GM12878 (cell line): ENCODE measurements at regions of chr22 and their contacts with region 1.

Region 1: DNA sequence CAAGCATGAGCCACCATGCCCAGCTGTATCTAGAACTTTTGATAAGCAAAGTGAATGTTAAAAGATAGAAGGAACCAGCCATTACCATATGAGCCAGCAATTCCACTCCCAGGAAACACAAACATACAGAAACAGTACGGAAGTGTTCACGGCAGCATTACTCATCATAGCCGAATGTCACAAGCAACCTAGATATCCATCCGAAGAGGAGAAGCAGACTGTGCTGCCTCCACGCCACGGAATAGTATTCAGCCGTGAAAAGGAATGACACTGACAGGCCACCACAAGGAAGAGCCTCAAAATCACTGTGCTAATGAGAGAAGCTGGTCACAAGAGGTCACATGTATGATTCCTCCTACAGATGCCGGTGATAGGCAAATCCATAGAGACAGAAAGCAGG is 17.6 kb upstream of the MGAT3 start:
- DNase-seq: no peak
- ATAC-seq: no peak
- H3K4me3 ChIP-seq: no peak overlapping the region
- H3K27ac ChIP-seq: no peak overlapping the region
- H3K4me1 ChIP-seq: peaks cover 42% of the 10 kb centered on the region
- H3K27me3 ChIP-seq: no peaks in the 10 kb centered on the region
- CTCF ChIP-seq: no peak
- EP300 ChIP-seq: no peak
- POLR2A ChIP-seq: no peak
- RAD21 ChIP-seq: no peak

Region 2: DNA sequence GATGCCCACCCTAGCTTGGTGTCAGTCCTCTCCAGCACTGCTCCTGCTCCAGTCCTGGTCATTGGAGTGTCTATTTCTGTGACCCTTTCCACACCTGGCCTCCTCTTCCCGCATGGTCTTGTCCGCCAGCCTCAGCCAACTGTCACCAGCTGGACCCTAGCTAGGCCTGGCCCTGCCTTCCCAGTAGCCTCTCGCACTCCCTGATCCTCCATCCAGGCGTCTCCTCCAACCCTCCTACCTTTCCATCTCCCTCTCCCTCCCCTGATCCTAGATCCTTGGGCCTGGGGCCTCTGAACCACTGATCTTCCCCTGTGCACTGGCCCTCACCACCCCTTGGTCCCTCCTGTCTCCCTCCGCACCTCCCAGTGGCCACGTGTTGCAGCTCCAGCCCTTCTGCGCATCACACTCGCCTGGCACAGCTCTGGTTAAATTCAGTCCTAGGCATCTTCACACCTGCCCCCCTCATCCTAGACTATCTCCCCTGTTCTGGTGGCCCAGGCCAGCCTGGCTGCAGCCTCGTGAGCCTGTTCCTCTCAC is 79.4 kb before region 1 on chr22:
- CTCF ChIA-PET with region 1: no interaction called
- POLR2A ChIA-PET with region 1: no interaction called
- RAD21 ChIA-PET with region 1: no interaction called
- SMC1A ChIA-PET with region 1: no interaction called
- in situ Hi-C with region 1: no loop called
- intact Hi-C with region 1: no loop called
- DNase-seq: no peak
- ATAC-seq: no peak
- H3K4me3 ChIP-seq: no peak overlapping the region
- H3K27ac ChIP-seq: no peak overlapping the region
- H3K4me1 ChIP-seq: no peaks in the 10 kb centered on the region
- H3K27me3 ChIP-seq: no peaks in the 10 kb centered on the region
- CTCF ChIP-seq: no peak
- EP300 ChIP-seq: no peak
- POLR2A ChIP-seq: no peak
- RAD21 ChIP-seq: no peak

Region 3: GRCh38 chr22:39405346-39406085 is 33.7 kb before region 1 on chr22:
- CTCF ChIA-PET with region 1: interaction called, 37 read pairs
- POLR2A ChIA-PET with region 1: no interaction called
- RAD21 ChIA-PET with region 1: interaction called, 13 read pairs
- SMC1A ChIA-PET with region 1: interaction called, 5 read pairs
- in situ Hi-C with region 1: no loop called
- intact Hi-C with region 1: no loop called
- DNase-seq: no peak
- ATAC-seq: no peak
- H3K4me3 ChIP-seq: no peak overlapping the region
- H3K27ac ChIP-seq: no peak overlapping the region
- H3K4me1 ChIP-seq: peaks cover 3% of the 10 kb centered on the region
- H3K27me3 ChIP-seq: no peaks in the 10 kb centered on the region
- CTCF ChIP-seq: no peak
- EP300 ChIP-seq: no peak
- POLR2A ChIP-seq: no peak
- RAD21 ChIP-seq: no peak

Region 4: DNA sequence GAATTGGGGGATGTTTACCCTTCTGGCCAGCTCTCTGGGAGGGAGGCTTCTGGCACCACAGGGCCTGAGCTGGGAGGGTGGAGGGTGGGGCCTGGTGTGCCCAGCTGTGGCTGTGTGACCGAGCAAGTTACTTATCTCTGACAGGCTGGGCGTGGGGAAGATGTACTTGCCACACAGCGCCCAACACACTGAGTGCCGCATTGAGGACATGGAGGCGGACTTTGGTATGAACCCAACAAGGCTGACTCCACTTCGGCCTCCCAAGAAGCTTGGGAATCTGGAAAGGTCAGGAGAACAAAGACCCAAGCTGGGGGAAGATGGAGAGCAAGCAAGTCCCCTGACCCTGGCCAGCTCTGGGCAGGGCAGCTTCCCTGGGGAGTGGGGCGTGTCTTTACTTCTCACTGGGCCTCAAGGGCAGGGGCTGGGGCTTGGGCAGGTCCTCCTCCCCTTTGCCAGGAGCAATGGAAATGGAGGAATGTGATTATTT is 15.3 kb after region 1 on chr22:
- CTCF ChIA-PET with region 1: interaction called, 23 read pairs
- POLR2A ChIA-PET with region 1: interaction called, 19 read pairs
- RAD21 ChIA-PET with region 1: interaction called, 6 read pairs
- SMC1A ChIA-PET with region 1: interaction called, 17 read pairs
- in situ Hi-C with region 1: no loop called
- intact Hi-C with region 1: no loop called
- DNase-seq: no peak
- ATAC-seq: 0 out of 3 replicates have a peak, but pooled peaks have one; percentile 8
- H3K4me3 ChIP-seq: no peak overlapping the region
- H3K27ac ChIP-seq: no peak overlapping the region
- H3K4me1 ChIP-seq: peaks cover 20% of the 10 kb centered on the region
- H3K27me3 ChIP-seq: no peaks in the 10 kb centered on the region
- CTCF ChIP-seq: no peak
- EP300 ChIP-seq: no peak
- POLR2A ChIP-seq: no peak
- RAD21 ChIP-seq: no peak

Region 5: DNA sequence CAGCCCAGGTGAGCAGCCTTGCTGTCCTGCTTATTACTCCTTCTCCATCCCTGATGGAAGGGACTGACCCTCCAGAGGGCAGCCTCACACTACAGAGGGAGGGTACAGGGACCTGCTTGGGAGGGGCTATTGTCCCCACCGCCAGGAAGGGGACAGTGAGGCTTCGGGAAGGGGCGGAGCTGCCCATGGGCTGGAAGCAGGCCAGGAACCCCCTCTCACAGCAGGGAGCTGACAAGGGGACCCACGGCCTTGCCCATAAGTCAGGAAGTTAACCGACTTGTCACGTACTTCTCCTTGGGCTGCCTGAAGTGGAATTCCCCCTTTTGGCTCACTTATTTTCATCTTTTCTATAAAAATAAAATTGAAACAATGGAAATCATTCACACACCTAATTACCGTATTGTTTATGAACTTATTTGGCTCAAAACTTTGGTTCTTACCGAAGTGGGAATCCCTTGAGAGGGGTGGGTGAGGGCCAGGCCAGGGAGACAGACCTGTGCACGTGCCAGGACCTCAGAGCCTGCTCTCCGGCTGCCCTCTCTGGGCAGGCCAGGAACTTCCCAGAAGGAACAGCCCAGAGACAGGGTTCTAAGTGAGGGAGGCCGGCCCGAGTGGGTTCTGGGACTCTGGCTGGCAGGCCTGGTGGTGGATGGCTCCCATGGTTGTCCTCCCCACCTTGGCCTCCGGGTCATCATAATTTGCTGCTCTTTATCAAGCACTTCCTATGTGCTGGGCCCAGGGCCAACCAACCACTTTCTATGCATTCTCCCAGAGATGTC is 23.5 kb after region 1 on chr22:
- CTCF ChIA-PET with region 1: interaction called, 23 read pairs
- POLR2A ChIA-PET with region 1: interaction called, 9 read pairs
- RAD21 ChIA-PET with region 1: interaction called, 57 read pairs
- SMC1A ChIA-PET with region 1: interaction called, 13 read pairs
- in situ Hi-C with region 1: no loop called
- intact Hi-C with region 1: no loop called
- DNase-seq: peak; percentile 62
- ATAC-seq: peak; percentile 32
- H3K4me3 ChIP-seq: no peak overlapping the region; the same call in 1 of the 2 replicates
- H3K27ac ChIP-seq: peak overlapping the region; percentile 70
- H3K4me1 ChIP-seq: peaks cover 61% of the 10 kb centered on the region
- H3K27me3 ChIP-seq: no peaks in the 10 kb centered on the region
- CTCF ChIP-seq: peak in 2 of 3 experiments; percentile 7 to 46; a peak in 3 of 6 replicates
- EP300 ChIP-seq: no peak; a peak in 1 of 4 replicates
- POLR2A ChIP-seq: no peak
- RAD21 ChIP-seq: peak; percentile 23; the same call in 1 of the 2 replicates

Region 6: DNA sequence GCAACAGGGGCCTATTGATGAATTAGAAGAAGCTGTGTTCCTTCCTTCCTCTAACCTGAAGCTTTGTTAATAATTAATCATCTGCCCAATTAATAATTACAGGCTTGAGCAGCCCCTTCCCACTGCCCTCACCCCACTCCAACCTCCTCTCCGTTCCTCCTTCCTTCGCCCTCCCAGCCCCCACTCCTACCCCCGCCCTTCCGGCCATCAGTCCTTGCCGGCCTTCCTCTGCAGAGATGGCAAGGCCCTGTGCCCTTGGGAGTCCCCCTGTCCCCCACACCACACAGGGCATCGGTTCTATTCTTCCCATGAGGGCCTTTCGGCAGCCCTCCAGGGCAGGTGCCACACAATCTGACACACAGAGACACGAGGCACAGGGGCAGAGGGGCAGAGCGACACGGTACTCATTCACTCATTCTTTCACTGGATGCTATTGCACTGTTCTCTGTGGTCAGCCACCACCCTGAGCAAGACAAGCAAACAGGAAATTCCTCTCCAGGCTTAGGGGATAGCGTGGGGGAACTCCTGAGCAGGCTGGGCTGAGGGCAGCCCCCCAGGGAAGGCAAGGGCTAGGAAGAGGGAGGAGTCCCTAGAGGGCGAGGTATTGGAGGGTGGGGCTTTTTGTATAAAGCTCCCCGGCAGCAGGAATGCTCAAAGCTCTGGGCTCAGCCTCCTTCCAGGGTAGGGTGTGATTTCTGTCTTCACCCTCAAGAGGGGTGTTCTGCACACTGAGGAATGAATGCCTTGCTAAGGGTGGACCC is 32.4 kb after region 1 on chr22:
- CTCF ChIA-PET with region 1: interaction called, 16 read pairs
- POLR2A ChIA-PET with region 1: interaction called, 8 read pairs
- RAD21 ChIA-PET with region 1: interaction called, 8 read pairs
- SMC1A ChIA-PET with region 1: interaction called, 21 read pairs
- in situ Hi-C with region 1: no loop called
- intact Hi-C with region 1: no loop called
- DNase-seq: peak; percentile 83
- ATAC-seq: peak; percentile 89
- H3K4me3 ChIP-seq: peak overlapping the region; percentile 50; the same call in 1 of the 2 replicates
- H3K27ac ChIP-seq: peak overlapping the region; percentile 76
- H3K4me1 ChIP-seq: peaks cover 47% of the 10 kb centered on the region
- H3K27me3 ChIP-seq: no peaks in the 10 kb centered on the region
- CTCF ChIP-seq: no peak
- EP300 ChIP-seq: no peak
- POLR2A ChIP-seq: no peak
- RAD21 ChIP-seq: no peak

Region 7: GRCh38 chr22:39496131-39496838 is 57.1 kb after region 1 on chr22:
- CTCF ChIA-PET with region 1: interaction called, 22 read pairs
- POLR2A ChIA-PET with region 1: no interaction called
- RAD21 ChIA-PET with region 1: interaction called, 6 read pairs
- SMC1A ChIA-PET with region 1: interaction called, 8 read pairs
- in situ Hi-C with region 1: no loop called
- intact Hi-C with region 1: no loop called
- DNase-seq: no peak
- ATAC-seq: peak; percentile 93
- H3K4me3 ChIP-seq: no peak overlapping the region
- H3K27ac ChIP-seq: no peak overlapping the region
- H3K4me1 ChIP-seq: no peaks in the 10 kb centered on the region
- H3K27me3 ChIP-seq: no peaks in the 10 kb centered on the region
- CTCF ChIP-seq: peak; percentile 68 to 86 (median 82)
- EP300 ChIP-seq: no peak
- POLR2A ChIP-seq: no peak
- RAD21 ChIP-seq: peak; percentile 42

Region 8: GRCh38 chr22:40263191-40263590 is 824.0 kb after region 1 on chr22:
- CTCF ChIA-PET with region 1: no interaction called
- POLR2A ChIA-PET with region 1: no interaction called
- RAD21 ChIA-PET with region 1: no interaction called
- SMC1A ChIA-PET with region 1: no interaction called
- in situ Hi-C with region 1: no loop called
- intact Hi-C with region 1: no loop called
- DNase-seq: no peak
- ATAC-seq: no peak
- H3K4me3 ChIP-seq: no peak overlapping the region
- H3K27ac ChIP-seq: no peak overlapping the region
- H3K4me1 ChIP-seq: no peaks in the 10 kb centered on the region
- H3K27me3 ChIP-seq: no peaks in the 10 kb centered on the region
- CTCF ChIP-seq: no peak
- EP300 ChIP-seq: no peak
- POLR2A ChIP-seq: no peak
- RAD21 ChIP-seq: no peak